ENCODE measurements at regions of chr3 and their contacts with region 1.

Region 1: GRCh38 chr3:43621656-43622432 is at the start of gene ANO10:
- DNase-seq: peak; percentile 97
- H3K4me3 Mint-ChIP-seq: peak within 1 kb of the TSS; percentile 85
- H3K27ac Mint-ChIP-seq: peak within 1 kb of the TSS; percentile 83
- H3K4me1 Mint-ChIP-seq: peaks cover 8% of the 10 kb centered on the region
- H3K27me3 Mint-ChIP-seq: no peaks in the 10 kb centered on the region
- total RNA-seq, gene ANO10: 9.3 to 9.7 TPM

Region 2: GRCh38 chr3:42804106-42804830 is 817.6 kb before region 1 on chr3 and contains the start of gene HIGD1A:
- CTCF ChIA-PET with region 1: no interaction called
- intact Hi-C with region 1: loop called (anchors 5 kb)
- DNase-seq: peak; percentile 95
- H3K4me3 Mint-ChIP-seq: peak within 1 kb of the TSS; percentile 96
- H3K27ac Mint-ChIP-seq: peak within 1 kb of the TSS; percentile 86
- H3K4me1 Mint-ChIP-seq: peaks cover 42% of the 10 kb centered on the region
- H3K27me3 Mint-ChIP-seq: peaks cover 11% of the 10 kb centered on the region
- total RNA-seq, gene HIGD1A: 57.1 to 66.4 TPM

Region 3: DNA sequence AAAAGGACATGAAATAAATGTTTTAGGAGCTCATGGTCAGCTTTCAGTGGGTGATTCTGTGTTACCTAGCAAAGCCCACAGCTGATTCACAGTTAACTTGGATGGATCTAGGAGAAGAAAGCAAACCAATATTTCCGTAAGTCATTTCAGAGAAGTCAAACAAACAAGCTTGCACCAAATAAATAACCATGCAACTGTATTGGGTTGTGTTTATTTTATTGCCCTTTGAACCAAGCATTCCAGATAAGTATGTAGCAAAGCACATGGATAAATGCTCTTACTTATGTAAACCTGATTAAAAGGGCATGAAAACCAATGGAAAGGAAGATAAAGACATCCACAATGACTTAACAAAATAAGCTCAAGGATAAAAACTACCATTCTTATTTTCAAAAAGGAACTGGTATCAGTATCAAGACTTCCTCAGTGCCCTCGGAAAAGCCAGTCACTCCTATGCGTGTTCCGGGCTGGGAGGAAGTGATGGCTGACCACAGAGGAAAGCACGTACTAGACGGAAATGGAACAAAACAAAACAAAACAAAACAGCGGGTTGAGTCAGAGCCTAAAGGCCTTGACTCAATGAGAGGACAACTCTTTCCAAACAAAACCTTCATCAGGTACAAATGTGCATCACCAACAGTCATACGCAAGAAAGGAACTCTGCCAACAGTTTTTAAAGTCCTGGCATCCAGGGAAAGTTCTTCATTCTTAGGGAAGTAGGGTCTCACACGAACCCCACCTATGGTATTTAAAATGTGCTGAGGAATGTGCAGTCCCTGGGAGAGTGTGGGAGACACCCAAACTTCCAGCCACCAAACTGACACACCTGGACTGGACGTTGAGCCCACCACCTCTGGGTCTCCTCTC is 232.2 kb before region 1 on chr3:
- CTCF ChIA-PET with region 1: no interaction called
- intact Hi-C with region 1: loop called (anchors 1 kb)
- DNase-seq: peak; percentile 87
- H3K4me3 Mint-ChIP-seq: peak overlapping the region; percentile 9
- H3K27ac Mint-ChIP-seq: peak overlapping the region; percentile 55
- H3K4me1 Mint-ChIP-seq: peaks cover 63% of the 10 kb centered on the region
- H3K27me3 Mint-ChIP-seq: no peaks in the 10 kb centered on the region

Region 4: GRCh38 chr3:43690400-43691119 is 68.7 kb after region 1 on chr3 and contains the start of gene ABHD5:
- CTCF ChIA-PET with region 1: no interaction called
- intact Hi-C with region 1: loop called (anchors 1 kb)
- DNase-seq: peak; percentile 85
- H3K4me3 Mint-ChIP-seq: peak within 1 kb of the TSS; percentile 83
- H3K27ac Mint-ChIP-seq: peak within 1 kb of the TSS; percentile 85
- H3K4me1 Mint-ChIP-seq: peaks cover 31% of the 10 kb centered on the region
- H3K27me3 Mint-ChIP-seq: no peaks in the 10 kb centered on the region
- total RNA-seq, gene ABHD5: 9.4 to 11.0 TPM

Region 5: GRCh38 chr3:43794776-43795175 is 172.9 kb after region 1 on chr3:
- CTCF ChIA-PET with region 1: no interaction called
- intact Hi-C with region 1: no loop called
- DNase-seq: no peak
- H3K4me3 Mint-ChIP-seq: no peak overlapping the region
- H3K27ac Mint-ChIP-seq: no peak overlapping the region
- H3K4me1 Mint-ChIP-seq: no peaks in the 10 kb centered on the region
- H3K27me3 Mint-ChIP-seq: no peaks in the 10 kb centered on the region

Region 6: DNA sequence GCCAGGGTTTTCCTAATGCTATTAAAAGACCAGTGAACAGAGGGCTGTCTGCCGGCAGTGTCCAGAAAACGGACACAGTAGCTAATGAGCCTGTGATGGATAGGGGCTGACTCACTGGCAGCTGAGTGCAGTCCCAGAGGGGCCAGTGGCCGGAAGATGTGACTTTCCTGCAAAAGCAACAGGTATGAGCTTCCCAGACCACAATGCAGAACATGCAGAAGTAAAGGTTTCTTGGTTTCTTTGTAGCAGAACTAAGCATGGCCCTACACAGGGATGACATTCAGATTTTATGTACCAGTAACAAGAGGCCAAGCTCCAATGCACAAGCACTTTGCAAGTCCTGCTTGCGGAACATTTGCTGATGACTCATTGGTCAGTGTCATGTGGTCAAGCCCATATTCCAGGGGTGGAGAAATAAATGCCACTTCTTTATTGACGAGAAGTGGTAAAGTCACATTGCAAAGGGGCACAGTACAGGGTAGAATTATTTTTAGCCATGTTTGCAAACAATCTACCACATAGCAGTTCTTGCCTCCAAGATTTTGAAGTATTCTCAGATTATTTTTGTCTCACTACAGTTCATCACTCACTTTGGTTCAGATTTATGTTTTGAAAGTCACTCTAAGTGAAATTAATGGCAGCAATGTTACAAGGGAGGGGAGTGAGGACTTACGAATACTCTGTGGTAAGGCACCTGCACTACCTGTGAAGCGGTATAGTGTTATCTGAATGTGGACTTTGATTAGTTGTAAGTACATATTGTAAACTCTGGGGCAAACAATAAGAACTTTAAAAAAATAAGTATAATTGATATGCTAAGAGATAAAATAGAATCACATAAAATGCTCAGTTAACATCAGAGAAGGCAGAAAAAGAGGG is 332.2 kb after region 1 on chr3:
- CTCF ChIA-PET with region 1: no interaction called
- intact Hi-C with region 1: no loop called
- DNase-seq: no peak
- H3K4me3 Mint-ChIP-seq: no peak overlapping the region
- H3K27ac Mint-ChIP-seq: no peak overlapping the region
- H3K4me1 Mint-ChIP-seq: peaks cover 7% of the 10 kb centered on the region
- H3K27me3 Mint-ChIP-seq: peaks cover 7% of the 10 kb centered on the region

Region 7: GRCh38 chr3:44104668-44105321 is 483.0 kb after region 1 on chr3:
- CTCF ChIA-PET with region 1: no interaction called
- intact Hi-C with region 1: loop called (anchors 10 kb)
- DNase-seq: peak; percentile 79
- H3K4me3 Mint-ChIP-seq: no peak overlapping the region
- H3K27ac Mint-ChIP-seq: no peak overlapping the region
- H3K4me1 Mint-ChIP-seq: peaks cover 14% of the 10 kb centered on the region
- H3K27me3 Mint-ChIP-seq: peaks cover 5% of the 10 kb centered on the region